K562 (cell line): ENCODE measurements at regions of chr11 and their contacts with region 1.

Region 1: GRCh38 chr11:17887779-17888178 is 125.1 kb downstream of the SERGEF start:
- DNase-seq: no peak
- ATAC-seq: no peak
- H3K4me3 ChIP-seq: no peak overlapping the region
- H3K27ac ChIP-seq: no peak overlapping the region
- H3K4me1 ChIP-seq: no peaks in the 10 kb centered on the region
- H3K27me3 ChIP-seq: no peaks in the 10 kb centered on the region
- CTCF ChIP-seq: no peak
- EP300 ChIP-seq: no peak
- POLR2A ChIP-seq: no peak
- RAD21 ChIP-seq: no peak

Region 2: DNA sequence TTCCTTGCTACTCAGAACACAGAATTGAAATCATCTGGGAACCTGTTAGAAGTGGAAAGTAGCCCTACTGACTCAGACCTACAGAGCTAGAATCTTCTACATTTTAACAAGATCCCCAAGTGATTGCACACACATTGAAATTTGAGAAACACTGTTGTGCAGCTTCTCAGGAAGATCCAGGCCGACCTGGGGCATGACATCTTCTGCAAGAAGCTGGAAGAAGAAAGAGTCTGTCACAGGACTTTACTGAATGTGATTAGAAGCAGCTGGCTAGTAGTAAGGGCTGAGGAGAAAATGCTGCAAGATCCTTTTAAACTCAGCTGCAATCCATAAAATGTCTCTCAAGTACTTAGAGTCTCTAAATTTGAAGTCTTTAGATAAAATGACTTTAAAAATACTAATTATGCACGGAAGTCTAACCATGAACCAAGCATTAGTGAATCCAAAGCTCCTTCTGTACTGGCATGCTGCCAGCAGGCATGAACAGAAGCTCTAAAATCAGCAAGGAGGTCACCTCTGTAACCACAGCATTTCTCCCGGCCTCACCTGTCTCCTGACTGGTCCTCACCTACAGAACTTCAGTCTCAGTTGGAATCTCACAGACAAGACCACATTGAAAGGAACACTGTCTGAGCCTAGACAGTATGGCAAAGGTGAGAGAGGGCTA is 40.0 kb after region 1 on chr11:
- CTCF ChIA-PET with region 1: no interaction called
- POLR2A ChIA-PET with region 1: no interaction called
- in situ Hi-C with region 1: no loop called
- intact Hi-C with region 1: no loop called
- DNase-seq: no peak
- ATAC-seq: no peak
- H3K4me3 ChIP-seq: no peak overlapping the region
- H3K27ac ChIP-seq: no peak overlapping the region
- H3K4me1 ChIP-seq: no peaks in the 10 kb centered on the region
- H3K27me3 ChIP-seq: no peaks in the 10 kb centered on the region
- CTCF ChIP-seq: no peak
- EP300 ChIP-seq: no peak
- POLR2A ChIP-seq: no peak
- RAD21 ChIP-seq: no peak

Region 3: DNA sequence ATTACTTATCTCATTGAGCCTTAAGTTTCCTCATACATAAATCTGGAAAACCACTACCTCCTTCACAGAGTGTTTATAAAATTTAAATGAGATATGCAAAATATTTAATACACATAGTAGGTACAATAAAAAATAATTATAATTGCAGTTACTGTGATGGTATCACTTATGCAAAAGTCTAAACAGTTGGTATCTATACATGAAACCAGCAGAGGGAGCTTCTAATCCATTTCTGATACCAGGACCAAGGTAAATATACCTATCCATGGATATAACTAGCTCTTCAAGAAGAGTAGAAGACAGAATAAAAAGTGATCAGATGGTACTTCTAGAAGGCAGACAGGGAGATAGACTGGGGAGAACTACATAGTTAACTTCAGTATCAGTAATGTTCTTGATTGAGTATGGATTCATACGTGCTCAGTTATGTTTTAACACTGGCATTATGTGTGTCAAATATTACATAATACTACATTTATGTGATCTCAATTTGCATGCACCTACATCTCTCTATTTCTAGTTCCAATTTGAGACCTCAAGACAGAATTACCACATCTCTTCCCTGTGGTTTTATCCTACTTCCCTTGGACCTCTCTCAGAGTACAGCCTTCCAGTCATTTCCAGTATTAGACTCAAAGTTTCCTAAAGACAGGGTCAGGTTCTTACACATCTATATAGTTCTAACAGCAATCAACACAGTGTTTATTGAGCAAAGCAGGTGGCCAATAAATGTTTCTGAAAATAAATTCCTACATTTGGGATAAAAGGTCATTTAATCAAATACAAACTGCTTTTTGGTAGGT is 652.6 kb after region 1 on chr11:
- CTCF ChIA-PET with region 1: no interaction called
- POLR2A ChIA-PET with region 1: no interaction called
- in situ Hi-C with region 1: loop called (anchors 10 kb)
- intact Hi-C with region 1: no loop called
- DNase-seq: peak in 1 of 4 experiments; percentile 31
- ATAC-seq: peak; percentile 75; the same call in 2 of the 3 replicates
- H3K4me3 ChIP-seq: no peak overlapping the region
- H3K27ac ChIP-seq: no peak overlapping the region
- H3K4me1 ChIP-seq: no peaks in the 10 kb centered on the region
- H3K27me3 ChIP-seq: no peaks in the 10 kb centered on the region
- CTCF ChIP-seq: peak; percentile 24 to 70 (median 31); a peak in 3 of 6 replicates
- EP300 ChIP-seq: no peak
- POLR2A ChIP-seq: no peak
- RAD21 ChIP-seq: peak; percentile 69 to 79